CD8-positive, alpha-beta T cell (primary cell): ENCODE measurements at regions of chr1 and their contacts with region 1.

Region 1: GRCh38 chr1:227563324-227564201 is at the start of gene ZNF678:
- DNase-seq: peak; percentile 71 to 95 (median 86)
- ATAC-seq: peak; percentile 95
- H3K4me3 ChIP-seq: peak within 1 kb of the TSS; percentile 81 to 87
- H3K4me3 Mint-ChIP-seq: peak within 1 kb of the TSS; percentile 90
- H3K27ac ChIP-seq: peak within 1 kb of the TSS; percentile 76 to 83
- H3K27ac Mint-ChIP-seq: peak within 1 kb of the TSS; percentile 93
- H3K4me1 ChIP-seq: peaks cover 7% of the 10 kb centered on the region
- H3K4me1 Mint-ChIP-seq: peaks cover 47% of the 10 kb centered on the region
- H3K27me3 ChIP-seq: peaks cover 4 to 17% of the 10 kb centered on the region in 2 experiments
- H3K27me3 Mint-ChIP-seq: peaks cover 26% of the 10 kb centered on the region
- CTCF ChIP-seq: no peak
- total RNA-seq, gene ZNF678: 2.9 to 3.2 TPM

Region 2: GRCh38 chr1:227542143-227543120 is 21.1 kb before region 1 on chr1:
- CTCF ChIA-PET with region 1: interaction called, 6 read pairs
- POLR2A ChIA-PET with region 1: interaction called, 5 read pairs
- intact Hi-C with region 1: loop called (anchors 1 to 2 kb)
- DNase-seq: peak; percentile 74 to 94 (median 90)
- ATAC-seq: peak; percentile 98
- H3K4me3 ChIP-seq: peak overlapping the region; percentile 43 to 61
- H3K4me3 Mint-ChIP-seq: peak overlapping the region; percentile 64
- H3K27ac ChIP-seq: peak overlapping the region in 1 of 2 experiments; percentile 57
- H3K27ac Mint-ChIP-seq: no peak overlapping the region
- H3K4me1 ChIP-seq: peaks cover 11% of the 10 kb centered on the region
- H3K4me1 Mint-ChIP-seq: peaks cover 5% of the 10 kb centered on the region
- H3K27me3 ChIP-seq: no peaks in the 10 kb centered on the region
- H3K27me3 Mint-ChIP-seq: no peaks in the 10 kb centered on the region
- CTCF ChIP-seq: peak; percentile 93

Region 3: GRCh38 chr1:227607336-227607898 is 43.9 kb after region 1 on chr1:
- CTCF ChIA-PET with region 1: no interaction called
- POLR2A ChIA-PET with region 1: no interaction called
- intact Hi-C with region 1: no loop called
- DNase-seq: peak in 2 of 9 experiments; percentile 22 to 50
- ATAC-seq: no peak
- H3K4me3 ChIP-seq: no peak overlapping the region
- H3K4me3 Mint-ChIP-seq: no peak overlapping the region
- H3K27ac ChIP-seq: no peak overlapping the region
- H3K27ac Mint-ChIP-seq: no peak overlapping the region
- H3K4me1 ChIP-seq: no peaks in the 10 kb centered on the region
- H3K4me1 Mint-ChIP-seq: peaks cover 3% of the 10 kb centered on the region
- H3K27me3 ChIP-seq: no peaks in the 10 kb centered on the region
- H3K27me3 Mint-ChIP-seq: no peaks in the 10 kb centered on the region
- CTCF ChIP-seq: no peak

Region 4: GRCh38 chr1:227734856-227735538 is 171.4 kb after region 1 on chr1 and contains the starts of genes JMJD4 and SNAP47:
- CTCF ChIA-PET with region 1: no interaction called
- POLR2A ChIA-PET with region 1: no interaction called
- intact Hi-C with region 1: loop called (anchors 1 kb)
- DNase-seq: peak; percentile 82 to 97 (median 92)
- ATAC-seq: peak; percentile 89
- H3K4me3 ChIP-seq: peak within 1 kb of the TSS; percentile 71 to 95
- H3K4me3 Mint-ChIP-seq: peak within 1 kb of the TSS; percentile 89
- H3K27ac ChIP-seq: peak within 1 kb of the TSS; percentile 71 to 76
- H3K27ac Mint-ChIP-seq: peak within 1 kb of the TSS; percentile 88
- H3K4me1 ChIP-seq: peaks cover 19% of the 10 kb centered on the region
- H3K4me1 Mint-ChIP-seq: peaks cover 51% of the 10 kb centered on the region
- H3K27me3 ChIP-seq: no peaks in the 10 kb centered on the region
- H3K27me3 Mint-ChIP-seq: no peaks in the 10 kb centered on the region
- CTCF ChIP-seq: no peak
- total RNA-seq, gene JMJD4: 7.4 to 9.5 TPM
- total RNA-seq, gene SNAP47: 11.0 to 13.8 TPM

Region 5: DNA sequence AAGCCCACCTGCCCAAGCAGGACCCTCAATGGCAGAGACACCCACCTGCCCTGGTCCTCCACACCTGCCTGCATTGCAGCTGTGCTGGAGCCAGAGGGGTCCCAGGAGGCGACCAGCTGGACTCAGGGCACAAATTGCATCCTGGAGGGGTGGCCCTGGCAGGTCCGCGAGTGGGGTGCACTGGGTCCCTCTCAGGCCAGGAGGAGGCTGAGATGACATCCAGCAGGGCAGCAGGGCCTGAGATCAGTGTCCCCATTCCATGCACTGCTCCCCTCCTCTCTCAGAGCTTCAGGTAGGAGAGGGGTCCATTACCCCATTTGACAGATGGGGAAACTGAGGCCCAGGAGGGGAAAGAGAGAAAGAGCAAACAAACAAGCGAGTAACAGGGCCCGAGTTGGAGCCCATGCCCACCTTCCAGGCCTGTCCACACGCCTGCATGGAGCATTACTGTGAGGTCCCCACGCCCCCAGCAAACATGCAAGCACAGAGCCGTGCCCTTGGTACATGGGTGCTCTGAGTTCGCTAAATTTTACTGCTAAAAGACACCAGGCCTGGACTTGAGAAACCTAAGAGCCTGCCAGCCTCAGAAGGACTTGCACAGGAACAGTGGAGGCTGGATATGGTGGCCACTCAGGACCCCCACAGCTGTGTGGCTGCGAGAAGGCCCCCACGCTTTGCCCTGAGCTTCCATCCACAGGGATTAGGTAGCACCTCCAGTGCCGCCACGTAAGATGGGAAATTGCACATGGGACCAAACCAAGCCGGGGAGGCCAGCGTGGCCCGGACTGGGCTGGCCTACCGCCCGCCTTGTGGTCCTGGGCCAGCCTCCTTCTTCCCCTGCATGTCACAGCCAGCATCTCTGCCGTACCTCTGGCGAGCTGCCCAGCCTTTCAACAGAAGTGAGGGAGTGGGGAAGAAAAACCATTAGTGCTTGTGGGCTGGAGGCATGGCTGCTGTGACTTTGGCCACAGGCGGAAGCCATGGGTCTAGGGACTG is 450.7 kb after region 1 on chr1:
- CTCF ChIA-PET with region 1: no interaction called
- POLR2A ChIA-PET with region 1: no interaction called
- intact Hi-C with region 1: no loop called
- DNase-seq: peak in 2 of 9 experiments; percentile 2 to 32
- ATAC-seq: no peak
- H3K4me3 ChIP-seq: no peak overlapping the region
- H3K4me3 Mint-ChIP-seq: no peak overlapping the region
- H3K27ac ChIP-seq: no peak overlapping the region
- H3K27ac Mint-ChIP-seq: no peak overlapping the region
- H3K4me1 ChIP-seq: no peaks in the 10 kb centered on the region
- H3K4me1 Mint-ChIP-seq: peaks cover 2% of the 10 kb centered on the region
- H3K27me3 ChIP-seq: no peaks in the 10 kb centered on the region
- H3K27me3 Mint-ChIP-seq: peaks cover 20% of the 10 kb centered on the region
- CTCF ChIP-seq: no peak

Region 6: DNA sequence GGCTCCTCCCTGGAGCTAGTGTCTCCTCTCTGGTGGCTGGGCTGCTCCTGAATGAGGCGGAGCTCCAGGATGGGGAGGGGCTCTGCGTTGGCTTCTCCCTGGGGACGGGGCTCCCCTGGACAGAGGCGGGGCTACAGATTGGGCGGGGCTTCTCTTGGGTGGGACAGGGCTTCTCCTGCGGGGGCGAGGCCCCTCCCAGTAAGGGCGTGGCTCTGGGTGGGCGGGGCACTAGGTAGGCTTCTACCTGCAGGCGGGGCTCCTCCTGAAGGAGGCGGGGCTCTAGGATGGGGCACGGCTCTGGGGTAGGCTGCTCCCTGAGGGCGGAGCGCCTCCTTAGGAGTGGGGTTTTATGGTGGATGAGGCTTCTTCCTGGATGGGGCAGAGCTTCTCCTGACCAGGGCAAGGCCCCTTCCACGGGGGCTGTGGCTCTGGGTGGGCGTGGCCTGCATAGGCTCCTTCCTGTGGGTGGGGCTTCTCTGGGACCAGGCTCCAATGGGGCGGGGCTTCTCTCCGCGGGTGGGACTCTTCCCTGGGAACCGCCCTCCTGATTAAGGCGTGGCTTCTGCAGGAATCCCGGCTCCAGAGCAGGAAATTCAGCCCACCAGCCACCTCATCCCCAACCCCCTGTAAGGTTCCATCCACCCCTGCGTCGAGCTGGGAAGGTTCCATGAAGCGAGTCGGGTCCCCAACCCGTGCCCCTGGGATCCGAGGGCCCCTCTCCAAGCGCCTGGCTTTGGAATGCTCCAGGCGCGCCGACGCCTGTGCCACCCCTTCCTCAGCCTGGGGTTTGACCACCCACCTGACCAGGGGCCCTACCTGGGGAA is 496.3 kb after region 1 on chr1:
- CTCF ChIA-PET with region 1: no interaction called
- POLR2A ChIA-PET with region 1: no interaction called
- intact Hi-C with region 1: loop called in 1 of 2 experiments (anchors 10 kb)
- DNase-seq: peak; percentile 36 to 77 (median 69)
- ATAC-seq: peak; percentile 52
- H3K4me3 ChIP-seq: peak overlapping the region; percentile 34 to 51
- H3K4me3 Mint-ChIP-seq: peak overlapping the region; percentile 61
- H3K27ac ChIP-seq: no peak overlapping the region
- H3K27ac Mint-ChIP-seq: no peak overlapping the region
- H3K4me1 ChIP-seq: peaks cover 27% of the 10 kb centered on the region
- H3K4me1 Mint-ChIP-seq: peaks cover 9% of the 10 kb centered on the region
- H3K27me3 ChIP-seq: peaks cover 36 to 47% of the 10 kb centered on the region in 2 experiments
- H3K27me3 Mint-ChIP-seq: peaks cover 24% of the 10 kb centered on the region
- CTCF ChIP-seq: no peak

Region 7: GRCh38 chr1:228109073-228109961 is 545.8 kb after region 1 on chr1 and contains the start of gene MRPL55:
- CTCF ChIA-PET with region 1: no interaction called
- POLR2A ChIA-PET with region 1: no interaction called
- intact Hi-C with region 1: loop called in 1 of 2 experiments (anchors 10 kb)
- DNase-seq: peak; percentile 97 to 100 (median 98)
- ATAC-seq: peak; percentile 97
- H3K4me3 ChIP-seq: peak within 1 kb of the TSS; percentile 93 to 98
- H3K4me3 Mint-ChIP-seq: peak within 1 kb of the TSS; percentile 95
- H3K27ac ChIP-seq: peak within 1 kb of the TSS; percentile 90 to 94
- H3K27ac Mint-ChIP-seq: peak within 1 kb of the TSS; percentile 96
- H3K4me1 ChIP-seq: peaks cover 21% of the 10 kb centered on the region
- H3K4me1 Mint-ChIP-seq: peaks cover 26% of the 10 kb centered on the region
- H3K27me3 ChIP-seq: no peaks in the 10 kb centered on the region
- H3K27me3 Mint-ChIP-seq: no peaks in the 10 kb centered on the region
- CTCF ChIP-seq: no peak
- total RNA-seq, gene MRPL55: 90.2 to 90.7 TPM